ENCODE measurements at regions of chr17 and their contacts with region 1.

Region 1: GRCh38 chr17:7825206-7825990 is 8.6 kb upstream of the KDM6B start:
- DNase-seq: peak; percentile 32
- H3K4me3 ChIP-seq: no peak overlapping the region
- H3K27ac ChIP-seq: no peak overlapping the region
- H3K4me1 ChIP-seq: no peaks in the 10 kb centered on the region
- H3K27me3 ChIP-seq: peaks cover 0 to 5% (median 0%) of the 10 kb centered on the region in 3 donors
- CTCF ChIP-seq: no peak
- EP300 ChIP-seq: no peak
- POLR2A ChIP-seq: no peak

Region 2: GRCh38 chr17:7745748-7746470 is 79.5 kb before region 1 on chr17:
- intact Hi-C with region 1: loop called (anchors 10 kb)
- DNase-seq: no peak
- H3K4me3 ChIP-seq: no peak overlapping the region
- H3K27ac ChIP-seq: no peak overlapping the region
- H3K4me1 ChIP-seq: peaks cover 0 to 14% (median 7%) of the 10 kb centered on the region in 4 donors
- H3K27me3 ChIP-seq: no peaks in the 10 kb centered on the region
- CTCF ChIP-seq: no peak
- EP300 ChIP-seq: no peak
- POLR2A ChIP-seq: no peak

Region 3: DNA sequence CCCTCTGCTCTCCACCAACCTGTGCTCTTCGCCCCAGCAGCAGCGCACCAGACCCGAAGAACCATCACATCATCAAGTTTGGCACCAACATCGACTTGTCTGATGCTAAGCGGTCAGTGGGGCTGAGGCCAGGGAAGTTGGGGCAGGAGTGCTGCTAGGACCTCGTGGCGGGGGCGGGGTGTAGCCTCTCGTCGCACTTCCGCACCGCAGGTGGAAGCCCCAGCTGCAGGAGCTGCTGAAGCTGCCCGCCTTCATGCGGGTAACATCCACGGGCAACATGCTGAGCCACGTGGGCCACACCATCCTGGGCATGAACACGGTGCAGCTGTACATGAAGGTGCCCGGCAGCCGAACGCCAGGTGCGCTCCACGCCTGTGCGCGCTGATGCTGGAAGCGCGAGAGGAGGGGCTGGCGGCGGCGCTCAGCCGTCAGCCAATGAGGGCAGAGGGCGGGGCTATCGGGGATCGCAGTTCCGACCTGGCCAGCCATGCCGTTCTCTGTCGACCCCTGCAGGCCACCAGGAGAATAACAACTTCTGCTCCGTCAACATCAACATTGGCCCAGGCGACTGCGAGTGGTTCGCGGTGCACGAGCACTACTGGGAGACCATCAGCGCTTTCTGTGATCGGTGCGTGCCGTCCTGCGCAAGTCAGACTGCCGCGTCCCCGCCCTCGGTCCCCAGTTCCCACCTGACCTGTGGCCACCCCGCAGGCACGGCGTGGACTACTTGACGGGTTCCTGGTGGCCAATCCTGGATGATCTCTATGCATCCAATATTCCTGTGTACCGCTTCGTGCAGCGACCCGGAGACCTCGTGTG is 26.2 kb after region 1 on chr17:
- intact Hi-C with region 1: loop called (anchors 1 kb)
- DNase-seq: peak; percentile 95
- H3K4me3 ChIP-seq: peak overlapping the region in 1 of 4 donors; percentile 19
- H3K27ac ChIP-seq: peak overlapping the region; percentile 4 to 64 (median 47)
- H3K4me1 ChIP-seq: peaks cover 0 to 37% (median 32%) of the 10 kb centered on the region in 4 donors
- H3K27me3 ChIP-seq: no peaks in the 10 kb centered on the region
- CTCF ChIP-seq: peak; percentile 96 to 99 (median 98)
- EP300 ChIP-seq: no peak
- POLR2A ChIP-seq: no peak

Region 4: GRCh38 chr17:7897773-7898172 is 72.4 kb after region 1 on chr17:
- intact Hi-C with region 1: loop called (anchors 10 kb)
- DNase-seq: no peak
- H3K4me3 ChIP-seq: no peak overlapping the region
- H3K27ac ChIP-seq: no peak overlapping the region
- H3K4me1 ChIP-seq: no peaks in the 10 kb centered on the region
- H3K27me3 ChIP-seq: no peaks in the 10 kb centered on the region
- CTCF ChIP-seq: peak in 3 of 4 experiments; percentile 21 to 56 (median 50)
- EP300 ChIP-seq: no peak
- POLR2A ChIP-seq: no peak

Region 5: DNA sequence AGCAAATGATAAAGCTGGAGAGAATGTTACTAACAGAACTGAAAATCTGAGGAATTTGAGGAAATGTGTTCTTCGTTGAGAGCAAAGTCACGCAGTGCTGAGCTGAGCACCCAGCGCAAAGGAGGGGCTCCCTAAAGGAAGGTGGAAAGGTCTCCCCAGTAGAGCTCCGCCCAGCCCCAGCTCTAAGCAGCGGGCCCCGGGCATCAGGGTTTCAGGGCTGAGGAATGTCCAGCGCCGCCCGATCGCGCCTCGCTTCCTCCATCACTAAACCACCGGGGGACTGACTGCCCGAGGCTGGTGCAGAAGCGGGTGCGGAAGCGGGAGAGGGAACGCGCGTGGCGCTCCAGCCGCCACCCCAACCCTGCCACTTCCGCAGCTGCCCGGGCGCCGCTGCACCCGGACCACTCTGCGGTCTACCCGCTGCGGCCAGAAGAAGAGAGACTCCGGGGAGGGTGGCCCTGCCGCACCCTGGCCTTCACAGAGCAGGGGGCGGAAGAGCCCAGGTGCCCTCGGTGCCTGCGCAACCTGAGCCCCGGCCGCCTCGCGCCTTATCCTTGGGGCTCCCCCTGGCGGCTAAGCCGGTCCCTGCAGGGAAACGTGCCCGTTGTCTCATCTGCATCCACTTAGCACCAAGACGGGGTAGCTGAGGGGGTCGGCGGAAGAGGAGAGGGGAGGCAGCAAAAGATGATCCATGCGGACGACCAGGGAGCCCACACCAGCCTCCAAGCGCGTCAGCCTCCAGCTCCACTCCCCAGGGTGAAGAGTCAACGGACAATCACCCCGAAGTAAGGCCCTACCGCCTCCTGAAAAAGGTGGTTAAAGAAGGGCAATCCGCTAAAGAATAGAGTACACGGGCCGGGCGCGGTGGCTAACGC is 164.6 kb after region 1 on chr17:
- intact Hi-C with region 1: loop called (anchors 1 kb)
- DNase-seq: peak; percentile 90
- H3K4me3 ChIP-seq: peak overlapping the region; percentile 33 to 59 (median 52)
- H3K27ac ChIP-seq: peak overlapping the region; percentile 9 to 62 (median 20)
- H3K4me1 ChIP-seq: peaks cover 0 to 12% (median 8%) of the 10 kb centered on the region in 4 donors
- H3K27me3 ChIP-seq: peaks cover 0 to 7% (median 0%) of the 10 kb centered on the region in 3 donors
- CTCF ChIP-seq: peak; percentile 90 to 98 (median 94)
- EP300 ChIP-seq: no peak
- POLR2A ChIP-seq: no peak

Region 6: GRCh38 chr17:8057691-8058114 is 232.3 kb after region 1 on chr17:
- intact Hi-C with region 1: loop called (anchors 5 kb)
- DNase-seq: peak; percentile 72
- H3K4me3 ChIP-seq: no peak overlapping the region
- H3K27ac ChIP-seq: no peak overlapping the region
- H3K4me1 ChIP-seq: peaks cover 0 to 9% (median 6%) of the 10 kb centered on the region in 4 donors
- H3K27me3 ChIP-seq: peaks cover 11 to 70% (median 49%) of the 10 kb centered on the region in 3 donors
- CTCF ChIP-seq: peak; percentile 50 to 72 (median 66)
- EP300 ChIP-seq: no peak
- POLR2A ChIP-seq: no peak

Measured in sigmoid colon (tissue), 7 donors.